WTC11 (cell line): ENCODE measurements at regions of chr13 and their contacts with region 1.

Region 1: DNA sequence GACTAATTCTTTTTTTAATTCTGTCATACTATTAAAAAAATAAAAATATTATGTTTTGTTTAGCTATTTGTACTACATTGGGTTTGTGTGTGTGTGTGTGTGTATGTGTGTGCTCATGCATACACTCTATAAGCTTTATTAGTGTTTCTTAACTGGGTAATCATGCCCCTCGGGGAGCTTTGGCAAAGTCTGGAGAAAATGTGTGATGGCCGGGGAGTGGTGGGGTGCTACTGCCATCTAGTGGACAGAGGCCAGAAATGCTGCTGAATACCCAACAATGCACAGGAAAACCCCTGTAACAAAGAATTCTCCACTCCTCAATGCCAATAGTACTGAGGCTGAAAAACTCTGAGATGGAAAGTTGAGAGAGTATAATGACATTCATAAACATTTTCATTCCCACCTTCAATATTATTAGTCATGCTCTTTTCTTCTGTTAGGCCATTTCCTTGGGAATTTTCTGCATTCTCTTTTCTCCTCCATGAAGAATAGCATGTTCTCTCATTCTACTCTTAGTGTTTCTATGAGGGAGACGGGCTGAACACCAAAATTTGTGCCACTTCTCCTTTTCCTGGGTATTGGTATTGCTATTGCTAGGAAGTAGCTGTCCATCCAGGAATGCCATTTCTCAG is 157.3 kb downstream of the DNAJC3 start:
- DNase-seq: peak; percentile 63
- ATAC-seq: peak; percentile 86
- H3K4me3 Mint-ChIP-seq: no peak overlapping the region
- H3K27ac Mint-ChIP-seq: no peak overlapping the region
- H3K4me1 Mint-ChIP-seq: peaks cover 4% of the 10 kb centered on the region
- H3K27me3 Mint-ChIP-seq: no peaks in the 10 kb centered on the region; the same call in 1 of the 2 replicates
- CTCF ChIP-seq: peak; percentile 82

Region 2: GRCh38 chr13:95644601-95645052 is 189.6 kb before region 1 on chr13 and contains the start of gene DZIP1:
- CTCF ChIA-PET with region 1: interaction called, 10 read pairs
- POLR2A ChIA-PET with region 1: no interaction called
- DNase-seq: peak; percentile 92
- ATAC-seq: peak; percentile 86
- H3K4me3 Mint-ChIP-seq: peak within 1 kb of the TSS; percentile 89
- H3K27ac Mint-ChIP-seq: no peak within 1 kb of the TSS
- H3K4me1 Mint-ChIP-seq: peaks cover 19% of the 10 kb centered on the region
- H3K27me3 Mint-ChIP-seq: peaks cover 9% of the 10 kb centered on the region
- CTCF ChIP-seq: no peak
- total RNA-seq, gene DZIP1: 31.0 to 33.5 TPM (median 32.0 TPM) in 3 replicates

Region 3: DNA sequence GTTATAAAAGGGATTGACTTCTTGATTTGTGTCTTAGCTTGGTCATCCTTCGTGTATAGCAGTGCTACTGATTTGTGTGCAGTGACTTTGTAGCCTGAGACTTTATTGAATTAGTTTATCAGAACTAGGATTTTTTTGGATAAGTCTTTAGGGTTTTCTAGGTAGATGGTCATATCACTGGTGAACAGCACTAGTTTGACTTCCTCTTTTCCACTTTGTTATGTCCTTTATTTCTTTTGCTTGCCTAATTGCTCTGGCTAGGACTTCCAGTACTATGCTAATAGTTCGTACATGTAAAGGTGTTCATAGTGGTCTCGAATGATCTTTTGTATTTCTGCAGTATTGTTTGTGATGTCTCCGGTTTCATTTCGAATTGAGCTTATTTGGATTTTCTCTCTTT is 11.9 kb before region 1 on chr13:
- CTCF ChIA-PET with region 1: interaction called, 10 read pairs
- POLR2A ChIA-PET with region 1: no interaction called
- DNase-seq: no peak
- ATAC-seq: no peak
- H3K4me3 Mint-ChIP-seq: no peak overlapping the region
- H3K27ac Mint-ChIP-seq: no peak overlapping the region
- H3K4me1 Mint-ChIP-seq: no peaks in the 10 kb centered on the region
- H3K27me3 Mint-ChIP-seq: no peaks in the 10 kb centered on the region
- CTCF ChIP-seq: no peak

Region 4: DNA sequence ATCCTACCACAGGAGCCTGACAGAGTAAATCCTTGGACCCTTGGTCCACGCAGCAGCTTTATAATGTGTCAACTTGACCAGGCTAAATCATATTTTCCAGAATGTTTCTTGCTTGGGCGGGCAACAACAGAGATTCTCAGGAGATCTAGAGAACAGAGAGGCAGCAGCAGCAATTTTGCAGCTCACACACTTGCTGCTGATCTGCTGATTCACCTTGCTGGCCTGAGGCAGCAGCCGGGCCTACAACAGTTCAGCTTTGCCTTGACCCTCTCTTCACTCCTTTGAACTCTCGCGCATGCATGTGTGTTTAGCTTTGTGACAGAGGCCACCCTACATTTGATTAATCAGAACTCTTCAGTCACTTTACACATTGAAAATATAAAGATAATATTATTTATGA is 59.6 kb after region 1 on chr13:
- CTCF ChIA-PET with region 1: no interaction called
- POLR2A ChIA-PET with region 1: no interaction called
- DNase-seq: no peak
- ATAC-seq: no peak; the same call in 1 of the 2 replicates
- H3K4me3 Mint-ChIP-seq: no peak overlapping the region
- H3K27ac Mint-ChIP-seq: peak overlapping the region; percentile 52; the same call in 1 of the 2 replicates
- H3K4me1 Mint-ChIP-seq: no peaks in the 10 kb centered on the region
- H3K27me3 Mint-ChIP-seq: no peaks in the 10 kb centered on the region
- CTCF ChIP-seq: no peak